ENCODE measurements at regions of chr5 and their contacts with region 1.

Region 1: DNA sequence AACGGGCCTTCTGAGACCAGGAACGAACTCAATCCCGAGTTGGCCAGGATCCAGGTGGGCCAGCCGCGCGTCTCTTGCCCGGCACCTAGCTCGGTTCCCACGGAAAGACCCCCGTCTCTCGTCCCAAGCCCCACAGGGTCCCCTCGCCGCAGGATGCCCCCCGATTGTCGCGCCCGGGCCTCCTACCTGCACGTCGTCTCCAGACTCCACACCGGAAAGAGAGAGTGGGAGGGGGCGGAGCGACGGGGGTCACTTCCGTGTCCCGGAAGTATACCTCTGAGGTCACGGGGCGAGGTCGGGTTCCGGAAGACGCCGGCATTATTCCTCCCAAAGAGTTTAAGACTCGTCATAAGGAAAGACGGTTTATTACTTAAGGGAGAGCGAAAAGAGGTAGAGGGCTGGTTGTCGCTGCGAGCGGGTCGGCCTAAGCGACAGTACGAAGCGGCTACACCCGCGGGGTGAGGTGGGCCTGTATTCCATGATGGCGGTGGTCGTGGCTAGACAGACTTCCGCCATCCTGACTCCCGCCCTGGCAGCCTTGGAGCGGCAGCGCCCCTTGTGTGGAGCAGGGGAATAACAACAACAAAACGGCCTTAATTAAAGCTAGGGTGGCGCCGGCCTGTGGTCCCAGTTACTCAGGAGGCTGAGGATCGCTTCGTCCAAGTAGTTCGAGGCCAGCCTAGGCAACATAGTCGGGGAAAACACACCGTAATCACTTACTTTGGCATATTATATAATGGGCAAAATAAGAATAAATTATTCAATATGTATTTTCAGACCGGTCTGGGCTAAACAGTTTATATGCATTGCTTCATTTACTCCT is at the start of gene RPS14:
- DNase-seq: peak; percentile 87
- ATAC-seq: peak; percentile 95
- H3K4me3 ChIP-seq: peak within 1 kb of the TSS; percentile 97
- H3K27ac ChIP-seq: peak within 1 kb of the TSS; percentile 99
- H3K4me1 ChIP-seq: peaks cover 2% of the 10 kb centered on the region; the same call in 1 of the 2 replicates
- H3K27me3 ChIP-seq: no peaks in the 10 kb centered on the region
- CTCF ChIP-seq: peak; percentile 86 to 95 (median 93)
- EP300 ChIP-seq: 0 out of 4 replicates have a peak, but pooled peaks of 1 of the 2 experiments have one; percentile 46
- POLR2A ChIP-seq: peak; percentile 99
- RAD21 ChIP-seq: peak; percentile 42; the same call in 1 of the 2 replicates
- polyA plus RNA-seq, gene RPS14: 2,295 to 2,356 TPM

Region 2: GRCh38 chr5:150409638-150410523 is 39.8 kb before region 1 on chr5:
- CTCF ChIA-PET with region 1: interaction called, 4 read pairs
- POLR2A ChIA-PET with region 1: interaction called, 9 read pairs
- RAD21 ChIA-PET with region 1: interaction called, 6 read pairs
- SMC1A ChIA-PET with region 1: interaction called, 3 read pairs
- in situ Hi-C with region 1: no loop called
- intact Hi-C with region 1: loop called (anchors 2 kb)
- DNase-seq: peak; percentile 84
- ATAC-seq: peak; percentile 13
- H3K4me3 ChIP-seq: peak overlapping the region; percentile 99
- H3K27ac ChIP-seq: peak overlapping the region; percentile 100
- H3K4me1 ChIP-seq: peaks cover 32% of the 10 kb centered on the region
- H3K27me3 ChIP-seq: no peaks in the 10 kb centered on the region
- CTCF ChIP-seq: no peak
- EP300 ChIP-seq: no peak
- POLR2A ChIP-seq: peak; percentile 89
- RAD21 ChIP-seq: no peak

Region 3: DNA sequence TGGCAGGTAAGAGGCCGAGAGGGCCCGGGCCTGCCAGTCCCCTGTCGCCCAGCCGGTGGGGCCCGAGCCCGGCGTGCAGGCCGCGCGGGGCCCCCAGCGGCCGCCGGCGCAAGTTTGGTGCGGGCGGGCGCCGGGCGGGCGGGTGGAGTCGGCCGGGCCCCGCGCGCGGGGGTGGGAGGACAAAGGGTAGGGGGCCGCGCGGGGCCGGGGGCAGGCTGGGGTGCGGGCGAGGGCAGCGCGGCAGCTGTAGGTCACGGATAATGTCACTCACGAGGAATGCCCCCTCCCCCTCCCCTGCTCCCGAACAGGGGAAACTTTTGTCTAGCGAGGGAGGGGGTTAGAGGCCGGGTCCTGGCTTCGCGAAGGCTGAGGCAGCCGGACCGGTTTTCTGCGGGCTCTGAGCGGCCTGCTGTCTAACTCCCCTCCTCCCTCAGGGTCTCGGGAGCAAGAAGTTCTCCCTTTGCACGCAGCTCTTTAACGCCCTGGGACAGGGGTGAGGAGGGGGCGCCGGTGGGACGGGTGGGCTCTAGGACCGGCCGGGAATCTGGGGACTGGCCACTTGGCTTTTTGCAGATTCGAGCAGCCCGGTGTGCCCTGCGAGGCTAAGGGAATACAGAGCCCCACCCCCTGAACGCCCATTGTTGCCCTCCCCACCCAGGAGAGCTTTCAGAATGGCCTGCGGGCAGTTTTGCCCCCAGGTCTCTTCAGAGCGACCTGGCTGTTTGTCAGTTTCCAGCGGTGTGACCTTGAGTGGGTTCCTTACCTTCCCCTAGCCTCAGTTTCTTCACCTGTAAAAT is 36.9 kb after region 1 on chr5:
- CTCF ChIA-PET with region 1: interaction called, 132 read pairs
- POLR2A ChIA-PET with region 1: interaction called, 7 read pairs
- RAD21 ChIA-PET with region 1: interaction called, 143 read pairs
- SMC1A ChIA-PET with region 1: interaction called, 7 read pairs
- in situ Hi-C with region 1: no loop called
- intact Hi-C with region 1: no loop called
- DNase-seq: no peak
- ATAC-seq: peak; percentile 35
- H3K4me3 ChIP-seq: peak overlapping the region; percentile 88
- H3K27ac ChIP-seq: peak overlapping the region; percentile 72
- H3K4me1 ChIP-seq: peaks cover 47% of the 10 kb centered on the region
- H3K27me3 ChIP-seq: no peaks in the 10 kb centered on the region
- CTCF ChIP-seq: no peak; a peak in 1 of 6 replicates
- EP300 ChIP-seq: no peak
- POLR2A ChIP-seq: no peak
- RAD21 ChIP-seq: no peak

Region 4: DNA sequence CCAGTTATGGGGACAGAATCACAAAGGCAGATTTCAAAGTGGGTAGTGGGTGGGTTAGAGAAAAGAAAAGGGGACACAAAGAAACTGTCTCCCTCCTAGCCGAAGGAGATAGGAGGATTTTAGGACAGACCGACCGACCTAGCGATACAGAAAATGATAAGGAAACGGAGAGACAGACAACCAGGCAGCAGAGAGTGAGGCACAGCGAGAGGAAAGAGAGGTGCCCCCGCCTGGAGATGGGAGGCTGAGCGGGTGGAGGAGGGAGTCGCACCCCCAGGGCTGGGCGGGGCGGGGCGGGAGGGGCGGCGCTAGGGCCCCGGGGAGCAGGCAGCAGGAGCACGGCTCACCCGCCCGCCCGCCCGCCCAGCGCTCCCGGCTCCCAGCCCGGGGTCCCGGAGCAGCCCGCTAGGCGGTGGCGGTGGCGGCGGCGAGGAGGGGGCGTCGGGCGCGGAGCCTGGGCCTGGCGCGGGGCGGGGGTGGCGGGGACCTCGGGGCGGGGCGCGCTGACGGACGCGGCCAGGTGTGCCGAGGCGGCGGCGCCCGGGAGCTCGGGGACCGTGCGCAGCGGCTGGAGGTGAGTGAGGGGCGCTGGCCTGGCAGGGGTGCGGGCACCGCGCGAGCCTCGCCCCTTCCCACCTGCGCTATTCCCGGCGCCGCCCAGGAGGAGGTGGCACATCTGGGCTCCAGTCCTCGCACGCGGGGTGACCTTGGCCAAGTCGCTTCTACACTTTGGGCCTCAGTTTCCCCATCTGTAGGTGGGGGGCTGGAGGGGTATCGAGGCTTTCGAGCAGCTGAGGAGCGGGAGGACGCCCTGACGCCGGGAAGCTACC is 174.8 kb after region 1 on chr5:
- CTCF ChIA-PET with region 1: interaction called, 3 read pairs
- POLR2A ChIA-PET with region 1: no interaction called
- RAD21 ChIA-PET with region 1: no interaction called
- SMC1A ChIA-PET with region 1: no interaction called
- in situ Hi-C with region 1: no loop called
- intact Hi-C with region 1: loop called (anchors 10 kb)
- DNase-seq: no peak
- ATAC-seq: peak; percentile 43
- H3K4me3 ChIP-seq: peak overlapping the region; percentile 91
- H3K27ac ChIP-seq: peak overlapping the region; percentile 66
- H3K4me1 ChIP-seq: peaks cover 40% of the 10 kb centered on the region
- H3K27me3 ChIP-seq: no peaks in the 10 kb centered on the region
- CTCF ChIP-seq: peak in 1 of 3 experiments; percentile 19; a peak in 1 of 6 replicates
- EP300 ChIP-seq: no peak
- POLR2A ChIP-seq: no peak
- RAD21 ChIP-seq: no peak

Region 5: DNA sequence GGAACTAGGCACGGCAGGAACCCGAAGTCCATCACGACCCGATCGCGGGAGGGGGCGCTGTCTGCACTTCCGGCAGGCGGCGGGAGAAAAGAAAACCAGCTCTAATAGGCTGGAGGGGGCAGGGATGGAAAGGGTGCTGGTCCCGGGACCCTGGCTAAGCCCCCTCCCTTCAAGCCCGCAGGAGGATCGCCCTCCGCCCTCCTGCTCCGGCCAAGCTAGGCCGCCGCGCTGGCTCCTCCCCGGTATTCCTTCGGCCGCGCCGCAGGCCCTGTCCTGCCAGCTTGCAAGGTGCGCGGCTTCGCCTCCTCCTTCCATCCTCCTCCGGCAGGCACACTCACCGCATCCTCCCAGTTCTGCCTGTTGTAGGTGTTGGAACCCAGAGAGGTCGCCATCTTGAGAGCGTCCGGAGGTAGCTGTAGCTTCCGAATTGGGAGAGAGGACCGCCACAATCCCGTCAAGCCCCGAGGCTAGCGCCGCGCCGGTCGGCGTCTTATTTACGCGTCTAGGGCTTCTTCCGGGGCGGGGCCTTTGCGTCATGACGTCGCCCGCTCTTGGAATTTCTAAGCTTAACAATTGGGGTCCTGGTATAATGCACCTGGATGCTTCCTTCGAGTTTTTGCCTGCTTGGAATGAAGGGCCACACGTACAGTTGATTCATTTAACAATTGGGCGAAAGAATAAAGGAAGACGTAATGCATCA is 251.0 kb after region 1 on chr5 and contains the start of gene RBM22:
- CTCF ChIA-PET with region 1: interaction called, 12 read pairs
- POLR2A ChIA-PET with region 1: no interaction called
- RAD21 ChIA-PET with region 1: interaction called, 4 read pairs
- SMC1A ChIA-PET with region 1: no interaction called
- in situ Hi-C with region 1: no loop called
- intact Hi-C with region 1: no loop called
- DNase-seq: peak; percentile 57
- ATAC-seq: peak; percentile 98
- H3K4me3 ChIP-seq: peak within 1 kb of the TSS; percentile 91
- H3K27ac ChIP-seq: peak within 1 kb of the TSS; percentile 87
- H3K4me1 ChIP-seq: no peaks in the 10 kb centered on the region
- H3K27me3 ChIP-seq: no peaks in the 10 kb centered on the region
- CTCF ChIP-seq: peak; percentile 57 to 70 (median 60)
- EP300 ChIP-seq: peak in 1 of 2 experiments; percentile 22; a peak in 1 of 4 replicates
- POLR2A ChIP-seq: peak; percentile 93
- RAD21 ChIP-seq: peak; percentile 29; the same call in 1 of the 2 replicates
- polyA plus RNA-seq, gene RBM22: 26.3 to 40.3 TPM